Panc1 (cell line): ENCODE measurements at regions of chr22 and their contacts with region 1.

Region 1: GRCh38 chr22:32040324-32040904 is 2.6 kb upstream of the SLC5A1 start:
- DNase-seq: no peak
- ATAC-seq: no peak
- H3K4me3 ChIP-seq: no peak overlapping the region
- H3K27ac ChIP-seq: no peak overlapping the region
- H3K4me1 ChIP-seq: no peaks in the 10 kb centered on the region
- H3K27me3 ChIP-seq: no peaks in the 10 kb centered on the region; the same call in 1 of the 2 replicates
- CTCF ChIP-seq: no peak

Region 2: GRCh38 chr22:31602259-31602952 is 438.0 kb before region 1 on chr22:
- CTCF ChIA-PET with region 1: interaction called, 10 read pairs
- POLR2A ChIA-PET with region 1: no interaction called
- in situ Hi-C with region 1: no loop called
- intact Hi-C with region 1: no loop called
- DNase-seq: no peak
- ATAC-seq: peak; percentile 72
- H3K4me3 ChIP-seq: no peak overlapping the region
- H3K27ac ChIP-seq: no peak overlapping the region
- H3K4me1 ChIP-seq: peaks cover 5% of the 10 kb centered on the region; the same call in 1 of the 2 replicates
- H3K27me3 ChIP-seq: no peaks in the 10 kb centered on the region
- CTCF ChIP-seq: no peak

Region 3: DNA sequence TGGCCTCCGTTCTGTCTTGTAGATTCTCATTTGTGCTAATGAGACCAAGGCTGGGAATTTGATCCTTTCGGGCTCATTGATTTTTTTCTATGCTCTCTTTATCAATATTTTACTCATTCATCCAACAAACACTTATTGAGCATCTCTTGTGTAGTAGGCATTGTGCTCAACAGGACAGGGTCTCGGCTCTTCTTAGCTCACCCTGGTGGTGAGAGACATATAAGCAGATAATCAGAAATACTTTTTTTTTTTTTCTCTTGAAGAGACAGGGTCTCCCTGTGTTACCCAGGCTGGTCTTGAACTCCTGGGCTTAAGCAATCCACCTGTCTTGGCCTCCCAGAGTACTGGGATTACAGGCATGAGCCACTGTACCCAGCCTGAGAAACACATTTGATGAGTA is 45.4 kb before region 1 on chr22:
- CTCF ChIA-PET with region 1: no interaction called
- POLR2A ChIA-PET with region 1: interaction called, 15 read pairs
- in situ Hi-C with region 1: no loop called
- intact Hi-C with region 1: no loop called
- DNase-seq: no peak
- ATAC-seq: no peak
- H3K4me3 ChIP-seq: no peak overlapping the region
- H3K27ac ChIP-seq: no peak overlapping the region
- H3K4me1 ChIP-seq: no peaks in the 10 kb centered on the region
- H3K27me3 ChIP-seq: no peaks in the 10 kb centered on the region
- CTCF ChIP-seq: peak; percentile 31

Region 4: GRCh38 chr22:32020117-32020516 is 20.3 kb before region 1 on chr22:
- CTCF ChIA-PET with region 1: no interaction called
- POLR2A ChIA-PET with region 1: no interaction called
- in situ Hi-C with region 1: no loop called
- intact Hi-C with region 1: no loop called
- DNase-seq: peak; percentile 12
- ATAC-seq: no peak
- H3K4me3 ChIP-seq: no peak overlapping the region
- H3K27ac ChIP-seq: no peak overlapping the region
- H3K4me1 ChIP-seq: no peaks in the 10 kb centered on the region
- H3K27me3 ChIP-seq: no peaks in the 10 kb centered on the region
- CTCF ChIP-seq: no peak